ENCODE measurements at regions of chr2 and their contacts with region 1.

Region 1: DNA sequence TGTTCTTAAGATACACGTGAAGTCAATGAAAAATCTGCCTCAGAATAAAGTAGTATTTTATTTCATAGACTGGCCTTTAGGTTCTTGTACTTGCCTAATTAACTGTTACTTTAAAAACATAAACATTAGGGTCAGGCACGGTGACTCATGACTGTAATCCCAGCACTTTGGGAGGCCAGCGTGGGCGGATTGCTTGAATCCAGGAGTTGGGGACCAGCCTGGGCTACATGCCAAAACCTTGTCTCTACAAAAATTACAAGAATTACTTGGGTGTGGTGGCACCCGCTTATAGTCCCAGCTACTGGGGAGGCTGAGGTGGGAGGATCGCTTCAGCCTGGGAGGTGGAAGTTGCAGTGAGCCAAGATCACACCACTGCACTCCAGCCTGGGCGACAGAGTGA is 16.0 kb upstream of the SNORC start:
- DNase-seq: peak in 1 of 4 donors; percentile 49
- ATAC-seq: peak; percentile 23
- H3K4me3 ChIP-seq: no peak overlapping the region
- H3K27ac ChIP-seq: peak overlapping the region in 1 of 2 donors; percentile 4
- H3K4me1 ChIP-seq: peaks cover 0 to 10% of the 10 kb centered on the region in 2 donors
- H3K27me3 ChIP-seq: no peaks in the 10 kb centered on the region
- CTCF ChIP-seq: no peak

Region 2: DNA sequence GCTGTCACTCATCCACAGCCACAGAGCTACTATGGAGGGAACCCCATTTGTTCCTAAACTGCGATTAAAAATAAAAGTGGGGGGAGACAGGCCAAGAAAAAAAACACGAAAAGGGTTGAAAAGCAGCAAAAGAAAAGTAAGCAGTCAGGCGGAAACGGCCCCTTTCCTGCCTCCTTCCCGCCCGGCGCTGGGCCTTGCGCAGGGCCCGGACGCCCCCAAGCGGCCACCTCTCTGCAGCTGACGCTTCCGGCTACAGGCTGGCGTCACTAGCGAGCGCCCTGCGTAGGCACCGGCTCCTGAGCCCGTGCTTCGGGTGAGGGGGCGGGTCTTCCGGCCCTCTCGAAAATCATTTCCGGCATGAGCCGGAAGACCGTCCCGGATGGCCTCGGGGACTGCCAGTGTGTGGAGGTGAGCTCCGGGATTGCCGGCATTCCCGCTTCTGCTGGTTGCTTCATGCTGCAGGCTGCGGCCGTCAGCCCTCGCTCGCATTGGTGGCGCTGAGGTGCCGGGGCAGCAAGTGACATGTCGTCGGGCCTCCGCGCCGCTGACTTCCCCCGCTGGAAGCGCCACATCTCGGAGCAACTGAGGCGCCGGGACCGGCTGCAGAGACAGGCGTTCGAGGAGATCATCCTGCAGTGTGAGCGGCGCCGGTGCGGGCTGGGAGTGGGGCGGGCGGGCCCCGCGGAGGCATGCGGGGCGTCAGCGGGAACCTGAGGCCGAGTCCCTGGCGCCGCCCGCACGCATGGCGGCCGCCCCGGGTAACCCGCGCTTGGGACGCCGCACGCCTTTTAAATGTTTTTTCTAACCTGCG is 397.4 kb after region 1 on chr2 and contains the start of gene ATG16L1:
- intact Hi-C with region 1: loop called in 1 of 2 experiments (anchors 10 kb)
- DNase-seq: peak; percentile 93 to 99 (median 98)
- ATAC-seq: peak; percentile 100
- H3K4me3 ChIP-seq: peak within 1 kb of the TSS; percentile 91 to 98
- H3K27ac ChIP-seq: peak within 1 kb of the TSS; percentile 81 to 83
- H3K4me1 ChIP-seq: peaks cover 3 to 64% of the 10 kb centered on the region in 2 donors
- H3K27me3 ChIP-seq: no peaks in the 10 kb centered on the region
- CTCF ChIP-seq: peak; percentile 92 to 93
- polyA plus RNA-seq, gene ATG16L1: 21.1 to 24.5 (median 23.0) TPM

Measured in left lung (tissue), 14 donors.